ENCODE measurements at regions of chr11 and their contacts with region 1.

Region 1: DNA sequence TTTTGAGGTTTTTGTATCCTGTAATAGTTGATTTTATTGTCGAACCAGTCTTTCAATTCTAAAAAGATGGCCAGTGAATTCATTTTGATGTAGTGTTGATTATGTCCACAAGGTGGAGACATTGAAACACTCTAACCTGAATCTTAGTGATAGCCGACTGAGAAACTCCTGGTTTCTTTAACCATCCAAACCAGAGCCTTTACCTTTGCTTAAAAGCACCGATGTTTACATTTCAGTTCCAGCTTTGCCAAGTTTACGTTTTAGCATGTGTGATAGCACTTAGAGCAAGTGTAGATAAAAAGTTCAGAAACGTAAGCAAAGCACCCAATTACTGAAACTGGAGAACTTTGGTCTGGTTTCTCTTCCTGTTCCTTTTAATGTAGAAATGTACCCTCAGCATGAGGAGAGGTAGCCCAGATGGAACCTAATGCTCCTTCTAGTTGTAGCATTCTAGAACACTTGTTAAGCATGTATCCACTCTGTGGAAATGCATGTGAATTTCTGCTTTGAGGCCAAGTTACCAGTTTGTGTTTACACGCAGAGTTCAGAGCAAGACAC is 208.6 kb downstream of the DBX1 start:
- DNase-seq: no peak
- H3K4me3 ChIP-seq: peak overlapping the region in 1 of 4 donors; percentile 5
- H3K27ac ChIP-seq: peak overlapping the region in 3 of 4 donors; percentile 4 to 37 (median 12)
- H3K4me1 ChIP-seq: peaks cover 31 to 41% (median 35%) of the 10 kb centered on the region in 4 donors
- H3K27me3 ChIP-seq: no peaks in the 10 kb centered on the region
- CTCF ChIP-seq: peak; percentile 63 to 76 (median 65)
- EP300 ChIP-seq: no peak
- POLR2A ChIP-seq: no peak

Region 2: GRCh38 chr11:20056109-20056949 is 104.7 kb after region 1 on chr11:
- intact Hi-C with region 1: loop called (anchors 5 kb)
- DNase-seq: no peak
- H3K4me3 ChIP-seq: no peak overlapping the region
- H3K27ac ChIP-seq: peak overlapping the region; percentile 59 to 65 (median 63)
- H3K4me1 ChIP-seq: peaks cover 25 to 50% (median 47%) of the 10 kb centered on the region in 4 donors
- H3K27me3 ChIP-seq: no peaks in the 10 kb centered on the region
- CTCF ChIP-seq: no peak
- EP300 ChIP-seq: no peak
- POLR2A ChIP-seq: no peak

Region 3: DNA sequence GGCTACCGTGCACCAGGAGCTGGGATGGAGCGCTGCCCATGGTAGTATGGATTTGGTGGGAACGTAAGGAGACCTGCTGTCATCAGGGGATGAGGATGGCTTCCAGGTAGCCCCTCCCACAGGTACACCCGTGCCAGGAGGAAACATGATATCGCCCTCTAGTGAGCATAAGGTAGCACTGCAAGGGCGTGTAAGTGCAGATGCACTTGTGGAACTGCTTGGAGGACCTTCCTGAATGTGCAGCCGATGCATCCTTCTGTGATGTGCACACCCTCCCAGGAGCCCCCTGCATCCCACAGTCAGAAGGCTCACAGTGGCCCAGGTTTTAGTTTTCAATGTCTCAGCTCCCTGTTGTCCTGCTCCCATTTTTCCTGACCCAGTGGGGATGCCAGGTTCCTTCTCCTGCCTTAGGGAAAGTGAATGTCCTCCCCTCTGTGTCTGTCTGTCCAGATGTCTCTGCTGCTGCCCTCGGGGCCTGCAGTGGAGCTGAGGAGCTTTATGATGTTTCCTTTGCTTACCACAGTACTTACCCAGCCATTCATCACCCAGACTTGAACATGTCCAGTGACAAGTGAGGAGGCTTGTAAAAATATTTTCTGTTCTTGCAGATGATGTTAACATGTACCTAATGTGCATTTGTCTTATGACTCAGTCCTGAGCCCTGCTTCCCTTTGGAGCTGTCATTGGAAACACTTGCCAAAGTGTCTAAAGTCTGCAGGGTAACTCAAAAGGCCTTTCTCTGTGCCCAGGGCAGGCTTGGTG is 159.5 kb after region 1 on chr11:
- intact Hi-C with region 1: loop called (anchors 5 kb)
- DNase-seq: no peak
- H3K4me3 ChIP-seq: no peak overlapping the region
- H3K27ac ChIP-seq: peak overlapping the region; percentile 83 to 88 (median 86)
- H3K4me1 ChIP-seq: peaks cover 25 to 46% (median 46%) of the 10 kb centered on the region in 4 donors
- H3K27me3 ChIP-seq: no peaks in the 10 kb centered on the region
- CTCF ChIP-seq: peak; percentile 63 to 85 (median 67)
- EP300 ChIP-seq: no peak
- POLR2A ChIP-seq: no peak

Region 4: GRCh38 chr11:20127671-20128527 is 176.3 kb after region 1 on chr11:
- intact Hi-C with region 1: loop called (anchors 2 kb)
- DNase-seq: no peak
- H3K4me3 ChIP-seq: no peak overlapping the region
- H3K27ac ChIP-seq: no peak overlapping the region
- H3K4me1 ChIP-seq: peaks cover 8 to 14% (median 12%) of the 10 kb centered on the region in 4 donors
- H3K27me3 ChIP-seq: no peaks in the 10 kb centered on the region
- CTCF ChIP-seq: peak; percentile 76 to 91 (median 80)
- EP300 ChIP-seq: no peak
- POLR2A ChIP-seq: no peak

Region 5: DNA sequence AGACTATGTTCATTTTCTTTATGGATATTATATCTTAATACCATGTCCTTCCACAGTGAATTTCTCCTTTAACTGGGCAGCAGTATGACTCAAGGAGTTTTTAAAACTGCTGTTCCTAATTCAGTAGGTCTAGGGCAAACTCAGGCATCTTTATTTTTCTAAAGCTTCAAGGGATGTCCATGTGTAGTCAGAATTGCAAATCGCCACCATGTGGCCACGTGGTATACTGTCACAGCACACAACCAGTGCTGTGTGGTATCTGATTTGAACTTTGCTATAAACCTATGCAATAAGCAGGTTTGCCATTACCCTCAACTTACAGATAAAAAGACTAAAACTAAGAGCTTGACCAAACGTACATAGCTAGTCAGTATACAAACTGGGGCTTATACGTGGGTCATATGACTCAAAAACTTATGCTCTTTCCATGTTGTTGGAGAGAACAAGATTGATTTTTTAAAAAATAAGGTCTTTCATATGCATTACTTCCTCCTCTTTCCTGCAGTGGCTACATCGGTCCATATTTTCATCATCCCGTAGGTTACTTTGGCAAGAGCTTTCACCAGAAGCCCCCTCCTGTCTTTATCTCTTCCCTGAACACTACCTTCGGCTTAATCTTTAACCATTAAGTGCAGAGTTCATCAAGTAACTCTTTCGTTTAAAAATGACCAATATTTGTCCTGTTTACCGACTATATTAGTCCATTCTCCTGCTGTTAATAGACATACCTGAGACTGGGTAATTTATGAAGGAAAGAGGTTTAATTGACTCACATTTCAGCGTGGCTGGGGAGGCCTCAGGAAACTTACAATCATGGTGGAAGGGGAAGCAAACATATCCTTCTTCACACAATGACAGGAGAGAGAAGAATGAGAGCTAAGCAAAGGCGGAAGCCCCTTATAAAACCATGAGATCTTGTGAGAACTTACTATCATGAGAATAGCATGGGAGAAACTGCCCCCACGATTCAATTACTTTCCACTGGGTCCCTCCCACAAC is 403.9 kb after region 1 on chr11:
- intact Hi-C with region 1: loop called (anchors 10 kb)
- DNase-seq: no peak
- H3K4me3 ChIP-seq: no peak overlapping the region
- H3K27ac ChIP-seq: no peak overlapping the region
- H3K4me1 ChIP-seq: no peaks in the 10 kb centered on the region
- H3K27me3 ChIP-seq: peaks cover 0 to 10% (median 0%) of the 10 kb centered on the region in 4 donors
- CTCF ChIP-seq: peak; percentile 36 to 47 (median 47)
- EP300 ChIP-seq: no peak
- POLR2A ChIP-seq: no peak